ENCODE measurements at regions of chr1 and their contacts with region 1.

Region 1: GRCh38 chr1:51661081-51661518 is 44.2 kb downstream of the OSBPL9 start:
- DNase-seq: no peak
- ATAC-seq: peak; percentile 84 to 96

Region 2: GRCh38 chr1:51693419-51694155 is 32.5 kb after region 1 on chr1:
- intact Hi-C with region 1: no loop called
- DNase-seq: no peak
- ATAC-seq: no peak

Region 3: DNA sequence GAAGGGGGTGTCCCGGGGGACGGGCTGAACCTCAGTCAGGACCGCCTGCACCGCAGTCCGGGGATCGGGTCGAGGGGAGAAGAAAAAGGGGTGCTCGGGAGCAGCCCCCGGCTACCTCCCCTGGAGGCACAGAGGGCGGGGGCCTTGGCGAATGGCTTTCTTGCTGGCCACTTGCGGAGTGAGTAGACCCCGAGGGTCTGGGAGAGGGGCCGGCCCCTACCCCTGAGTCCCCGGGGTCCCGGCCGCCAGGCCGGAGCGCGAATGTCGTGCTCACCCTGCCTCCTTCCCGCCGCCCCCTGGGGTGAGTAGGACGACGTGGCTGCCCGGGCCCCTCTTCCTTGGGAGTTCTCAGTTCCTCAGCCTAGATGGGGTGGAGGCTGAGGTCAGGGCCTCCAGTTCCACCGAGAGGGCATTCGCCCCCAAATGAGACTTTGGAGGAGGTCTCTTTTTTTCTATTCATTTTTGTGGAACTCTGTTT is 68.8 kb after region 1 on chr1:
- intact Hi-C with region 1: loop called in 1 of 2 experiments (anchors 10 kb)
- DNase-seq: peak; percentile 29
- ATAC-seq: peak; percentile 35 to 52

Measured in left cardiac atrium (tissue), 4 donors.